Ovary (tissue), 10 donors: ENCODE measurements at regions of chr9 and their contacts with region 1.

Region 1: DNA sequence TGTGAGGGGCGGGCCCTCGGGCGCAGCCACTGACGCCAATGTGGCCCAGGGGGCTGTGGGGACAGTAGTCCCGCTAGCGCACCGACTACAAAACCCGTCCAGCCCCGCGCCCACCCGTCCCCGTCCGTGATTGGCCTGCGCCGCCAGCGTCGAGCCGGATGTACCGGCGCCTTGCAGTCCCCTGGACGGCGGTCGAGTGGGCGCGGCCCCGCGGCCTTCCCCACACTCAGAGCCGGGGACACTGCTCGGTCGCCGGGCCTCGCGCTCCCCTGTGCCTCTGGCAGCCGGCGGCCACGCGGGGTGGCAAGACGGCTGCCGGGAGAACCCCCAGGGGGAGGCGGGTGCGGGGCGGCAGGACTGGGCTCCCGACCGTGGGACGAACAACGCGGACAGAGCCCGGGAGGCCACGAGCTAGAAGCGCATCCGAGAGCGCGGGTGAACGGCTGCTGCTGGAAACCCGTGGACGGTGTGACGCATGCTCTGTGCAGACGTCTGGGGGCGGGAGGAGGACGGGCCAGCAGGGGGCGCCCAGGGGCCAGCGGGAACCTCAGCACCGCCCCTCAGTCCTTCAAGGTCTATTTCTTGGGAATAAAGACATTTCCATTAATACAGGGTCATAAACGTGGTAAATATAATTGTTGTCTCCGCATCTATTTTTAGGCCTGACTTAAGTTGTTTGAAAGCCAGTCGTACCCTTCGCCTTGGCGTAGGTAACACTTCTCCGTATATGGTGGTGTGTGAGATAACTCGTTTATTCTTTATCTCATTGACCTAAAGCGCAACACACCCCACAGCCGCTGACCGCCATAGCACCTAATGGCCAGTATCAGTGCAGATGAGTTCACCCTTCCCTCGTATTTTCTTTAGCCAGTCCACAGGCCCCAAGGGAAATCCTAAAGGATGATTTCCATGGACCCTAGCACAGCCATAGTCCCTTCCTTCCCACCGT is 629 bp upstream of the BICD2 start:
- DNase-seq: peak; percentile 98 to 99 (median 98)
- H3K4me3 ChIP-seq: peak overlapping the region; percentile 82
- H3K27ac ChIP-seq: peak overlapping the region; percentile 95 to 100
- H3K4me1 ChIP-seq: peaks cover 26% of the 10 kb centered on the region
- H3K27me3 ChIP-seq: no peaks in the 10 kb centered on the region
- CTCF ChIP-seq: peak; percentile 93 to 96 (median 93)
- EP300 ChIP-seq: no peak
- POLR2A ChIP-seq: peak; percentile 96

Region 2: GRCh38 chr9:92669890-92670708 is 95.2 kb before region 1 on chr9 and contains the start of gene IPPK:
- intact Hi-C with region 1: loop called in 1 of 4 experiments (anchors 10 kb)
- DNase-seq: peak; percentile 96 to 98 (median 97)
- H3K4me3 ChIP-seq: peak within 1 kb of the TSS; percentile 93
- H3K27ac ChIP-seq: peak within 1 kb of the TSS; percentile 20 to 32
- H3K4me1 ChIP-seq: peaks cover 3% of the 10 kb centered on the region
- H3K27me3 ChIP-seq: no peaks in the 10 kb centered on the region
- CTCF ChIP-seq: no peak
- EP300 ChIP-seq: peak; percentile 64
- POLR2A ChIP-seq: peak; percentile 58
- total RNA-seq, gene IPPK: 5.7 to 8.5 (median 7.1) TPM

Region 3: DNA sequence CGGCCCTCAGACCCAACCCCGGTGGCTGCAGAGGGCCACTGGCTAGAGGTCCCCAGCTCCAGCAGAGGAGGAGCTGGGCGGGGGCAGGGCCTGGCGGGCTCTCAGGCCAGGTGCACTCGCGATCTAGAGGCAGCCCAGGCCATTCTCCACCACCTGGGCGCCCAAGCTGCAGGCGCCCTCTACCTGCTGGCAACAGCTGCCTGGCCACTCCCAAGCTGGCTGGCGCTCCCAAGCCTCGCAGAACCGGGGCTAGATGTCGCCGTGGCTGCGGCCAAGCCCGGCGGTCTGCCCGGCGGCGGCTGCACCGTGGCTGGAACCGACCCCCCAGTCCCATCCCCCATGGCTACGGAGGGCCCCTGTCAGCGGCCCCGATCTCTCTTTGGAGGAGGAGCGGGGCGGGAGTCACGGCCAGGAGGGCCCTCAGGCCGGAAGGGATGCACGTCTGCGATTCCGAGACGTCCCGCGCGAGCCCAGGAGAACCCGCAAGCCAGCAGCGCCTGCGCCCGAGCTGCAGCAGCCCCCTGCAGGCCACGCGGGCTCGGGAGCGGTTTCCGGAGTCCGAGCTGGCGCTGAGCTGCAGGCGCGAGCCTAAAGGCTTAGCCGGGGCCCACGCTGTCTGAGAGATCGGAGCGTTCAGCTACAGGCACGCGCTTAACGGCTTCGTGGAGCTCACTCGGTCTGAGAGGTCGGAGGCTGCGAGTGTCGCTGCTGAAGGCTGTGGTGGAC is 43.6 kb after region 1 on chr9:
- intact Hi-C with region 1: no loop called
- DNase-seq: peak; percentile 60 to 83 (median 67)
- H3K4me3 ChIP-seq: no peak overlapping the region
- H3K27ac ChIP-seq: no peak overlapping the region
- H3K4me1 ChIP-seq: peaks cover 9% of the 10 kb centered on the region
- H3K27me3 ChIP-seq: peaks cover 4% of the 10 kb centered on the region
- CTCF ChIP-seq: peak in 1 of 3 donors; percentile 21
- EP300 ChIP-seq: no peak
- POLR2A ChIP-seq: no peak